ENCODE measurements at regions of chr14 and their contacts with region 1.

Region 1: GRCh38 chr14:67221248-67221981 is 19.8 kb upstream of the PALS1 start:
- DNase-seq: no peak
- ATAC-seq: no peak
- H3K4me3 Mint-ChIP-seq: no peak overlapping the region
- H3K27ac Mint-ChIP-seq: no peak overlapping the region
- H3K4me1 Mint-ChIP-seq: no peaks in the 10 kb centered on the region
- H3K27me3 Mint-ChIP-seq: peaks cover 7% of the 10 kb centered on the region

Region 2: DNA sequence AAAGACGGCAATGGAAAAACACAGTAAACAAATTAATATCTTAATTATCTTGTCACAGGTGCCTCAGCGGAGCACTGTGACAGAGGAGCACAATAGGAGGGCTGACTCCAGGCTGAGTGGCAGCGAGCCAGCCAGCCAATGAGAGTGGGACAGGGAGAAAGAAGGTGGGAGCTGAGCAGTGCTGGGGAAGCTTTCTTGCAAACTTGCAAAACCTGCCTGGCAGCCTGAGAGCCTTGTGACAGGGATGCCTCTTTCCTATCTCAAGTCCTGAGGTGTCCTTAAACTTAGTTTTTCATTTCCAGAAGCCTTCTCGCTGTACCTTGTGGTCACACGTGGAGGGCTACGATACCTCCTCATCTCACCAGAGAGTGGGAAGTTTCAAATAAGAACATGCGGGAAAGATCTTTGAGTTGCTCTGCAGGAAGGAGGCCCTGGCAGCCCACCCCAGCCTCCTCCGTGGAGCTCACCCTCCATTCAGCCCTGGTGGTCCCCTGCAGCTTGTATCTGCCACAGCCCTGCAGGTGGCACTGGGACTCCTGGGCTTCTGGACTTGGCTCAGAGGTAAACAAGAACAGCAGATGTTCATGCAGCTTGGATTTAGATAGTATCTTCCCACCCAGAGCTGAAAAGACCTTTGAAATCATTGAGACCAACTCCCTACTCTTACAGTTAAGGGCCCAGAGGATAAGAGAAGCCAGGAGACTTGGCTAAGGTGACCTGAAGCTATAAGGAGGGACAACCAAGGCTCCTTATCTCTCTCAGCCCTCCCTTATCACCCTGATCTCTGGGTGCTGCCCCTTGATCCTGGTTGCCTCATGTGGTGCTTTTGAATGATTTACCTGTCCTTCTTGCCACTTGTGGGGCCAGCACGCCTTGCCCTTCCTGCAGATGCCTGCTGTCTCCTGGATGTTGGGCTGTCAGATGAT is 1965.6 kb before region 1 on chr14:
- CTCF ChIA-PET with region 1: no interaction called
- POLR2A ChIA-PET with region 1: no interaction called
- intact Hi-C with region 1: no loop called
- DNase-seq: no peak
- ATAC-seq: no peak
- H3K4me3 Mint-ChIP-seq: no peak overlapping the region
- H3K27ac Mint-ChIP-seq: no peak overlapping the region
- H3K4me1 Mint-ChIP-seq: peaks cover 12% of the 10 kb centered on the region
- H3K27me3 Mint-ChIP-seq: no peaks in the 10 kb centered on the region

Region 3: GRCh38 chr14:66771234-66771633 is 450.2 kb before region 1 on chr14:
- CTCF ChIA-PET with region 1: no interaction called
- POLR2A ChIA-PET with region 1: no interaction called
- intact Hi-C with region 1: no loop called
- DNase-seq: no peak
- ATAC-seq: no peak
- H3K4me3 Mint-ChIP-seq: no peak overlapping the region
- H3K27ac Mint-ChIP-seq: no peak overlapping the region
- H3K4me1 Mint-ChIP-seq: no peaks in the 10 kb centered on the region
- H3K27me3 Mint-ChIP-seq: no peaks in the 10 kb centered on the region

Region 4: DNA sequence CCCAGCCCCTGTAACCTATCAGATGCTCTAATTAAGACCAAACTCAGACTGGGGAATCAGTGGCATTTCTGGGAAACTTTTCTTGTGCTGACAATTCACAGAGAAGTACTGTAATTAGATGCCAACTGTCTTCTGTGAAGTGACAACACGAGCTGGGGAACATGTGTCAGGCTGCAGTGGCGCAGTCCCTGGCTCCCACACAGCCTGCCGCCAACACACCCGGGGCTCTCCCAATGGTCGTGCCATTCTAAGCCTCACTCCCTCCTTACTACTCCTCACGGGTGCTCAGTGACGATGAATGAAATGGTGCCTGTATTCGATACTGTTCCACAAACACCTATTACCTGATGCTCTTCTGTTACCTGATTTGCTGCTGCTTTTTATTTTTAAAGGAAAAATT is 13.6 kb before region 1 on chr14:
- CTCF ChIA-PET with region 1: interaction called, 13 read pairs
- POLR2A ChIA-PET with region 1: no interaction called
- intact Hi-C with region 1: no loop called
- DNase-seq: no peak
- ATAC-seq: no peak
- H3K4me3 Mint-ChIP-seq: no peak overlapping the region
- H3K27ac Mint-ChIP-seq: no peak overlapping the region
- H3K4me1 Mint-ChIP-seq: no peaks in the 10 kb centered on the region
- H3K27me3 Mint-ChIP-seq: no peaks in the 10 kb centered on the region